WTC11 (cell line): ENCODE measurements at regions of chr12 and their contacts with region 1.

Region 1: DNA sequence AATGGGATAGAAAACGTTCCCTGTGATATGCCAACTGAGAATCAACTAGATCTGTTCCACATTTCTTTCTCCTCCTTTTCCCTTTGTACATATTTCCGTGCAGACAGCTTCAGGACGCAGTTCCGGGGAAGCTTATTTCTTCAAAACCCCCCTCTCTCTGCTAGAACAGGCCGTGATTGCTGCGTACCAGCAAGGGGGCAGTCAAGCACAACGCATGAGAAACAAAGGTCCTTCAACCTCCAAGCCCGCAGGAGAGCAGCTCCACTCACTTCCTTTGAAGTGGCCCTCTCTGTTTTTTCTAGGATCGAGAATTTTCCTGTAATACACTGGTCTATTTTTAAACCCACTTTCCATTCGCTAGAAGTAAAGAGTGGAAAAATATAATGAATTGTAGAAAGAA is 80.8 kb downstream of the ZNF664 start:
- DNase-seq: peak; percentile 70
- ATAC-seq: peak; percentile 96
- H3K4me3 Mint-ChIP-seq: no peak overlapping the region
- H3K27ac Mint-ChIP-seq: no peak overlapping the region
- H3K4me1 Mint-ChIP-seq: peaks cover 24% of the 10 kb centered on the region
- H3K27me3 Mint-ChIP-seq: peaks cover 3% of the 10 kb centered on the region; the same call in 1 of the 2 replicates
- CTCF ChIP-seq: no peak

Region 2: DNA sequence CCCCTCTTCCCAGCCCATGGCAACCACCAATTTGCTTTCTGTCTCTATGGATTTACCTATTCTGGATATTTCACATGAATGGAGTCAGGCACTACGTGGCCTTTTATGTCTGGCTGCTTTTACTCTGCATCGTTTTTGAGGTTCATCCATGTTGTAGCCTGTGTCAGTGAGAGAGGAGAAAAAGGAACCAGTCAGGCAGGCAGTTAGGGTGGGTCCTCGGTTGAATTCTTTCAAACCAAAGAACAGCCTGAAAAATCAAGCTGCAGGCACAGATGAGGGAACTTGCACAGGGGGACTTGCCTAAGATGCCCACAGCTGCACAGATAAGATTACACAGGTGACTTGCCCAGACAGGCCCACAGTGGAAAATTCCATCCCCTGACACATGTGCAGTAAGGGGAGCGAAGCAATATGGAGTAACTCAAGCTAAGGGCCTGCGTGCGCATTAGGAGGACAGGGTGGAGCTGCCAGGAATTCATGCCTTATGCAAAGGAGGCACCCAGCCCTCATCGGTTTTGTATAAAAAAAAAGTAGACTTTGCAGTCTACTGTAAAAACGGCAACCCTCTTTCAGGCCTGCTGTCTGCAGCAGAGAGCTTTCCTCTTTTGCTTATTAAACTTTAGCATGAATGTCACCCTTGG is 88.7 kb after region 1 on chr12:
- CTCF ChIA-PET with region 1: interaction called, 11 read pairs
- POLR2A ChIA-PET with region 1: no interaction called
- DNase-seq: no peak
- ATAC-seq: no peak
- H3K4me3 Mint-ChIP-seq: peak overlapping the region; percentile 37
- H3K27ac Mint-ChIP-seq: peak overlapping the region; percentile 98
- H3K4me1 Mint-ChIP-seq: peaks cover 70% of the 10 kb centered on the region
- H3K27me3 Mint-ChIP-seq: no peaks in the 10 kb centered on the region; the same call in 1 of the 2 replicates
- CTCF ChIP-seq: no peak

Region 3: DNA sequence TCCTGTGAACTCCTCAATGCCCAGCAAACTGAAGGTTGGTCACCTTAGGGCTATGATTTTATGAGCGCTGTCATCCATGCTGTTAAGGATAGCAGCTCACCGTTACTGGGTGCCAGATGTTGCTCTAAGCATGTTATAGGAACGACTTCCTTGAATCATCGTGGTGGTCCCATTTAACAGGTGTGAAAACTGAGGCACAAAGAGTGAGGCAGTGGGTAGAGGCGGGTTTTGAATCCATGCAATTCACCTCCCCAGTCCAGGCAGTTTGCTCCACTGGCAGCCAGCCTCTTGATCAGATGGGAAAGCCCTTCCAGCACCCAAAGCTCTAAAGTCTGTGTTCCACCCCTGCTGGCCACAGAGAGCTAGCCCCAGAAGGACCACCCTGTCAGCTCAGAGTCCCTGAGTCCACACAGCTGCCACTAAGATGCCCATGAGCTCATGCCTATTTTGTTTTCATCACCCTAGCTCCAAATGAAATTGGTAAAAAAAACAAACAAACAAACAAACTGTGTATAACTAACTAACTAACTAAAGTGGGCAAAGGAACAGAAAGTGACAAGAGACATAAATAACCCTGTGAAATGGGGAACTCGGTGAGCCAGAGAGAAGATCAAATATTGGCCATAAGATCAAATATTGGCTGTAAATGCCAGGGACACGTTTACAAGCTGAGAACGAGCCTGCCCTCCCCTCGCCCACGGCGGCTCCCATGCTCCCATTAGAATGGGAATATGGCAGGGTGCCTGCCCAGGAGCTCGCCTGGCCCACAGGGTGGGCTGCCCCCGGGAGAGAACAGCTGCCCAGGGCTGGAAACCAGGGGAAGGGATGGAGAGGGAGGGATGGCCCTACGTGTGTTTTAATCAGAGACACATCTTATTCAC is 168.8 kb after region 1 on chr12:
- CTCF ChIA-PET with region 1: interaction called, 11 read pairs
- POLR2A ChIA-PET with region 1: interaction called, 3 read pairs
- DNase-seq: no peak
- ATAC-seq: no peak
- H3K4me3 Mint-ChIP-seq: no peak overlapping the region
- H3K27ac Mint-ChIP-seq: 0 out of 2 replicates have a peak overlapping the region, but pooled peaks have one; percentile 29
- H3K4me1 Mint-ChIP-seq: peaks cover 6% of the 10 kb centered on the region
- H3K27me3 Mint-ChIP-seq: no peaks in the 10 kb centered on the region
- CTCF ChIP-seq: no peak

Region 4: GRCh38 chr12:124302807-124303578 is 249.1 kb after region 1 on chr12:
- CTCF ChIA-PET with region 1: interaction called, 12 read pairs
- POLR2A ChIA-PET with region 1: no interaction called
- DNase-seq: no peak
- ATAC-seq: peak; percentile 50
- H3K4me3 Mint-ChIP-seq: no peak overlapping the region
- H3K27ac Mint-ChIP-seq: no peak overlapping the region
- H3K4me1 Mint-ChIP-seq: peaks cover under 1% of the 10 kb centered on the region
- H3K27me3 Mint-ChIP-seq: no peaks in the 10 kb centered on the region; the same call in 1 of the 2 replicates
- CTCF ChIP-seq: no peak

Region 5: GRCh38 chr12:124332068-124332672 is 278.3 kb after region 1 on chr12:
- CTCF ChIA-PET with region 1: interaction called, 15 read pairs
- POLR2A ChIA-PET with region 1: no interaction called
- DNase-seq: peak; percentile 59
- ATAC-seq: peak; percentile 41; the same call in 1 of the 2 replicates
- H3K4me3 Mint-ChIP-seq: no peak overlapping the region
- H3K27ac Mint-ChIP-seq: no peak overlapping the region
- H3K4me1 Mint-ChIP-seq: peaks cover 9% of the 10 kb centered on the region; the same call in 1 of the 2 replicates
- H3K27me3 Mint-ChIP-seq: no peaks in the 10 kb centered on the region
- CTCF ChIP-seq: no peak